ENCODE measurements at regions of chr9 and their contacts with region 1.

Region 1: DNA sequence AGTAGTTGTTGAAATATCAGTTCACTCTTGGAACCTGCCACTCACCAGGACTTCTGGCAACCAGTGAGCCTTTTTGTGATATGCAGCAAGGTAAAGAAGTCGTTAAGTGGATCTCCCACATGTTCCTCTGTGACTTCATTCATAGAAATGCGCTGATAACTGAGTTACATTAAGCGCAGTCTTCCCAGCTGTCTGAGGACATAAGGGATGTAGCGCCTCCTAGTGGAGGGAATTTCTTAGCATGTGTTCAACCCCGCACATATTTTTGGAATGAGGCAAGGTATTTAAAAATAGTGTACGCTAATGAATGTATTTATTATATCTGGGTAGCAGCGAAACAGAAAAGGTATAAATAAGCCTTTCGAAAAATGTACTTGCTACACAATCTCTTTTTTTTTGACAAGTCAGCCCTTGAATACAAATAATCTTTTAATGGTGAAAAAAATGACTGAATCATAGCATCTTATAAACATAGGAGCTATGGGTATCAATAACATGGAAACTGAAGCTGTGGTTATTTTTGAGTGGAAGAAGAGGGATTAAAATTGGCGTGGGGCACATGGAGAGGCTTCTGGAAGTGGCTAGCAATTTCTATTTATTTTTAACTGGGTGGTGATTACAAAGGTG is 38.0 kb downstream of the PALM2AKAP2 start:
- DNase-seq: peak; percentile 88
- H3K4me3 ChIP-seq: no peak overlapping the region
- H3K27ac ChIP-seq: peak overlapping the region; percentile 44
- H3K4me1 ChIP-seq: peaks cover 24% of the 10 kb centered on the region
- H3K27me3 ChIP-seq: no peaks in the 10 kb centered on the region
- CTCF ChIP-seq: peak; percentile 62 to 86
- POLR2A ChIP-seq: no peak

Region 2: DNA sequence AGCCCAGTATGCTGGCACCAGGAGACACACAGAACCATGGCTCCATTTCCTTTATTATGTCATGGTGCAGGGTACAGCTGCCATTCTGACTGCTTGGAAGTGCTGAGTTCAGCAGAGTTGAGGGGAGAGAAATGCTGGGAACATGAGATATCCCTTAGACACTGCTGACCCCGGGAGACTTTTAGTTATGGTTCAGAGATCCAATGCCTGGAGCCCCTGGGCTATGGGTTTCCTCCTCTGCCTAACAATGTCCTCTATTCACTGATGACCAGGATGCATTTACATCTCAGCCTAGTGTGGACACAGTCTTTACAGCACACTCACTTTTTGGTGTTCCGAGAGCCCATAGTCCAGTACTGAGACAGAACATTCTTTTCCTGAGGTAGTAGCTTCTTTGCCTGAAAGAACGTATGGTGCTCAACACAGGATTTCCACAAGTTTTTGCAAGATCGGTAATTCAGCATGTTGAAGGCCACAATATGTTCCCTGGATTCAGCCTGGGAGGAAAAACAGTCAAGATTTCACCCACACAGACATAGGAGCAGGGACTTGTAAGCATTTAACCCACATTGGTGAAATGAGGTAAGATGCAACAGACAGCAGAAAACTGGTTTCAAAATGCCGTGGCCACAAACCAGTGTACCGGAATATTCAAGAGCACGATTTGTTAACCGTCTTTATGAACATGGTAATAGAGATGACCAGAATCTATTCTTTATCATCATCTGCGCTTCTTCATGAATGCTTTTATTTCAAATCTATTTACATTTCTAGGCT is 391.1 kb before region 1 on chr9:
- CTCF ChIA-PET with region 1: no interaction called
- POLR2A ChIA-PET with region 1: no interaction called
- dilution Hi-C with region 1: no loop called
- intact Hi-C with region 1: no loop called
- DNase-seq: no peak
- H3K4me3 ChIP-seq: no peak overlapping the region
- H3K27ac ChIP-seq: no peak overlapping the region
- H3K4me1 ChIP-seq: no peaks in the 10 kb centered on the region
- H3K27me3 ChIP-seq: peaks cover 2% of the 10 kb centered on the region in 2 experiments
- CTCF ChIP-seq: no peak
- POLR2A ChIP-seq: no peak

Region 3: GRCh38 chr9:109520478-109521132 is 297.4 kb before region 1 on chr9:
- CTCF ChIA-PET with region 1: no interaction called
- POLR2A ChIA-PET with region 1: no interaction called
- dilution Hi-C with region 1: no loop called
- intact Hi-C with region 1: loop called (anchors 2 kb)
- DNase-seq: peak; percentile 66
- H3K4me3 ChIP-seq: no peak overlapping the region
- H3K27ac ChIP-seq: no peak overlapping the region
- H3K4me1 ChIP-seq: no peaks in the 10 kb centered on the region
- H3K27me3 ChIP-seq: peaks cover 0 to 2% of the 10 kb centered on the region in 2 experiments
- CTCF ChIP-seq: peak; percentile 81 to 83
- POLR2A ChIP-seq: no peak

Region 4: DNA sequence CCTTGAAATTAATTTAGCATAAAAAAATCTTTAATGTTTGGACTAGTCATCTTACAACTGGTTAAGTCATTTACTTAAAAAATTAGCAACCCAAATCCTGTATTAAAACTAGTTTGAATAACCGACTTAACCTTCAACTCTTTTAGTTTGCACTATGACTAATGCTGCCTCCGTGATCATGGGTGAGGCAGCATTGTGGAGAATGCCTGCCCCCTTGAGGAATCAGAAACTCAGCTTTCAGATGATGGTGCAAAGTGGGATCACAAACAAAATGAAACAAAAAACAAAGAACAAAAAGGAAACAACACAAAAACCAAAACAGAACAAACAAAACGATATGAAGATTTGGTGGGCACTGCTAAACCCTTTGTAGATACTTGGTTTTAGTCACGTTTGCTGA is 165.0 kb before region 1 on chr9:
- CTCF ChIA-PET with region 1: no interaction called
- POLR2A ChIA-PET with region 1: no interaction called
- dilution Hi-C with region 1: no loop called
- intact Hi-C with region 1: loop called (anchors 5 kb)
- DNase-seq: no peak
- H3K4me3 ChIP-seq: no peak overlapping the region
- H3K27ac ChIP-seq: no peak overlapping the region
- H3K4me1 ChIP-seq: no peaks in the 10 kb centered on the region
- H3K27me3 ChIP-seq: no peaks in the 10 kb centered on the region
- CTCF ChIP-seq: no peak
- POLR2A ChIP-seq: no peak

Region 5: GRCh38 chr9:109689701-109690100 is 128.3 kb before region 1 on chr9:
- CTCF ChIA-PET with region 1: no interaction called
- POLR2A ChIA-PET with region 1: no interaction called
- dilution Hi-C with region 1: no loop called
- intact Hi-C with region 1: no loop called
- DNase-seq: no peak
- H3K4me3 ChIP-seq: no peak overlapping the region
- H3K27ac ChIP-seq: no peak overlapping the region
- H3K4me1 ChIP-seq: no peaks in the 10 kb centered on the region
- H3K27me3 ChIP-seq: no peaks in the 10 kb centered on the region
- CTCF ChIP-seq: no peak
- POLR2A ChIP-seq: no peak

Region 6: GRCh38 chr9:109831998-109832658 is 14.2 kb after region 1 on chr9:
- CTCF ChIA-PET with region 1: interaction called, 14 read pairs
- POLR2A ChIA-PET with region 1: no interaction called
- dilution Hi-C with region 1: no loop called
- intact Hi-C with region 1: no loop called
- DNase-seq: no peak
- H3K4me3 ChIP-seq: no peak overlapping the region
- H3K27ac ChIP-seq: no peak overlapping the region
- H3K4me1 ChIP-seq: no peaks in the 10 kb centered on the region
- H3K27me3 ChIP-seq: peaks cover 2 to 4% of the 10 kb centered on the region in 2 experiments
- CTCF ChIP-seq: no peak
- POLR2A ChIP-seq: no peak

Region 7: DNA sequence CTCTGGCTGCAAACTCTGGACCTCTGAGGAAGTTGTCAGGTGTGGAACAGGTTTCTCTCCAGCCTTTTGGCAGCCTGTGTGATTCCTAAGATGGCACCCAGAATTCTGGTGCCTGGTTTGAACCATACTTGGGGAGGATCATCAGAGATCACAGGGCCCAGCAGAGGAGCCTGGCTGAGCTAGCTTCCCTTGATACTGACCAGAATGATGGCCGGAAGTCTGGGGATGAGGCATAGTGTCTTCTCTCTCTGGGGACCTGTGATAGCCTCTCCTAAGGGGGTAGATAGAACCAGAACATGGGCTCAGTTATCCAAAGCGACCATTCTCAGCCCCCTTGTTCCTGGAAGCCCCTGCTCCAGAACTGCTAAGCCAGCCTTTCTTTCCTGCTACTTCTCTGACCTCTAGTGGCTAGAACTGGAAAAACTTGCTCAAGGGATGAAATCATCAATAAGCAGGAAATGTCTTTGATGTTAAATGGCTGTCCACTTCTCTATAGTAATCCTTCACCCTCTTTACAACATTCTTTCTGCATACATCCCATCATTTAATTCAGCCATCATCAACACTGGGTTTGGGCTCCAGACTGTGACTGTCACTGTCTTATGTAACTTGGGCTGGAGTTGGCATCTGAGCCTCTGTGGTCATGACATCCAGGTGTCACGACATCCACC is 334.9 kb after region 1 on chr9:
- CTCF ChIA-PET with region 1: interaction called, 6 read pairs
- POLR2A ChIA-PET with region 1: no interaction called
- dilution Hi-C with region 1: no loop called
- intact Hi-C with region 1: loop called (anchors 2 kb)
- DNase-seq: peak; percentile 84
- H3K4me3 ChIP-seq: no peak overlapping the region
- H3K27ac ChIP-seq: peak overlapping the region; percentile 36
- H3K4me1 ChIP-seq: peaks cover 13% of the 10 kb centered on the region
- H3K27me3 ChIP-seq: no peaks in the 10 kb centered on the region
- CTCF ChIP-seq: peak; percentile 63 to 65
- POLR2A ChIP-seq: no peak

Region 8: GRCh38 chr9:110256380-110257096 is 438.6 kb after region 1 on chr9 and contains the start of gene TXN:
- CTCF ChIA-PET with region 1: no interaction called
- POLR2A ChIA-PET with region 1: no interaction called
- dilution Hi-C with region 1: no loop called
- intact Hi-C with region 1: loop called (anchors 1 kb)
- DNase-seq: peak; percentile 85
- H3K4me3 ChIP-seq: peak within 1 kb of the TSS; percentile 40 to 93 (median 77)
- H3K27ac ChIP-seq: peak within 1 kb of the TSS; percentile 67
- H3K4me1 ChIP-seq: peaks cover 23% of the 10 kb centered on the region
- H3K27me3 ChIP-seq: no peaks in the 10 kb centered on the region
- CTCF ChIP-seq: no peak
- POLR2A ChIP-seq: peak; percentile 96
- total RNA-seq, gene TXN: 280 and 286 TPM in 2 replicates